Left lung (tissue), 14 donors: ENCODE measurements at regions of chr6 and their contacts with region 1.

Region 1: DNA sequence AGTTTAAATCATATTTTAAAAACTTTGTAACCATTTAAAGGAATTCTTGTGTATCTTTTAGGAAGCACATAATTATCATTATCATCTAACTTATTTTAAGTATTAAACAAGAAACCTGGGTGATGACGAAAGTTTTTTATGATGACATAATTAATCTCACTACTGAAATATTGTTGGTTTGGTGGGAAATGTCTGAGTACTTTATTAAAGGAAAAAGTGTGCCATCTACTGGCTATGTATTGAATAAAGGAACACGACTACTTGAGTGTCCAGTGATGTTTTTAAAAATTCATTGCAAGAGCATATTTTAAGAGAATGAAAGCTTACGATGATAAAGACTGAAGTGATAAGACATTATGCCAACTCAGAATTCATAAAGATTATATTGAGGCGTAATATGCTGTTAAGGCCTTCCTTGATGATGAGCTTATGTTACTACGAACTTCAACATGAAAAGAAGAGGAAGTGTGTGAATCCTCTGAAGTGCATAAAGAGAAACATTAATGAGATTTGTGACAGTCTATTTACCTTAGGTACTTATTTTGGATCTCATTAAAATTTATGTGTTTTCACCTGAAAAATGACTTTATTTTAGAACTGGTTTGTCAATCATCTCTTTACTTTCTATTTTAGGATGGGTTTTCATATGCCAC is 12.0 kb upstream of the TRMT11 start:
- DNase-seq: peak in 1 of 4 donors; percentile 46
- ATAC-seq: peak; percentile 80
- H3K4me3 ChIP-seq: no peak overlapping the region
- H3K27ac ChIP-seq: no peak overlapping the region
- H3K4me1 ChIP-seq: peaks cover 0 to 3% of the 10 kb centered on the region in 2 donors
- H3K27me3 ChIP-seq: no peaks in the 10 kb centered on the region
- CTCF ChIP-seq: peak; percentile 48 to 49

Region 2: DNA sequence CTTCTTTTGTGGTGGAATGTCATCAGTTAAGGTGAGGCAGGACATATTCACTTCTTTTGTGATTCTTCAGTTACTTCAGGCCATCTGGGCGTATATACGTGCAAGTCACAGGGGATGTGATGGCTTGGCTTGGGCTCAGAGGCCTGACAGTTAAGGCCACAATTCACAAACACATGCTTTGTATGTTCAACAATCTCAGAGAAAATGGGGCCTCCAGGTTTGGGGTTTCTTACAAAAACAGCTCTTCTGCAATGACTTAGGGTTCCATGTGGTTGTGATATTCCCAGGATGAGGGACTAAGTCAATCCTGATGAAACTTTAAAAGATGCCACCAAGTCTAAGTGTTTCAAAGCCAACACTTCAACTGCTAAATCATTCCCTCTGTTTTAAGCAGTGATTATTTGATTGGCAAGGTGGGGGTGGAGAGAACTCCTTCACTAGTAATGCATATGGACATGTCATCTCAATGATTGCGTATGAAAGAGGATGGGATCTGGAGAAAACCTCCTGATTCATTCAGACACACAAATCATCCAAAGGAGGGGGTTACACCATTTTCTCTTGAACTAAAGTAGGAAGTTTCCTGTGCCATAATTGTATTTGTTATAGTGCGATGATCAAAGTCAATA is 266.6 kb before region 1 on chr6:
- intact Hi-C with region 1: no loop called
- DNase-seq: no peak
- ATAC-seq: no peak
- H3K4me3 ChIP-seq: no peak overlapping the region
- H3K27ac ChIP-seq: no peak overlapping the region
- H3K4me1 ChIP-seq: no peaks in the 10 kb centered on the region
- H3K27me3 ChIP-seq: no peaks in the 10 kb centered on the region
- CTCF ChIP-seq: no peak

Region 3: GRCh38 chr6:125769147-125769783 is 205.1 kb before region 1 on chr6:
- intact Hi-C with region 1: no loop called
- DNase-seq: no peak
- ATAC-seq: no peak
- H3K4me3 ChIP-seq: no peak overlapping the region
- H3K27ac ChIP-seq: no peak overlapping the region
- H3K4me1 ChIP-seq: no peaks in the 10 kb centered on the region
- H3K27me3 ChIP-seq: peaks cover 0 to 10% of the 10 kb centered on the region in 2 donors
- CTCF ChIP-seq: no peak

Region 4: DNA sequence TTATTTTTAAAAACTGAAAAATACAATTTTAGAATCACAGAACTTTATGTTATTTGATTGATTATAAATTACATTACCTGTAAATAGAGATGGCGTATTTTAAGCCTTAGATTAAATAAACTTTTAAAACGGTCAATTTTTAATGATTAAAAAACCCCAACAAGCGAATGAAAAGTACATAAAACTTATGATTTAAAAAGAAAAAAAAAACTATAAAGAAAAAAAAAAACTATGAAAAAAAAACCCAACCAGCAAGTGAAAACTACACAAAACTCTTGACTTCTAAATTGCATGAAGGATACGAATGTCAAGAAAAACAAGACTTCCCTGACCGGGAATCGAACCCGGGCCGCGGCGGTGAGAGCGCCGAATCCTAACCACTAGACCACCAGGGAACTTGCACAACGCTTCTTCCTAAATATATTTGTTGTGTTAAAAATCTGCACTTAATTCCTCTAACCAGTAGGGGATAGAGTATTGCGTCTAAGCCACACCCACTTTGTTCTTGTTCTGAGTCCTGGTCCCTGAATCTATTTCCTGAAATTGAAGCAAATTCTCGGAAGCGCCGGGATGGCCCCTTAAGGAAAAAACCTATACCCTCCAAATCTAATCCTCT is 194.3 kb before region 1 on chr6:
- intact Hi-C with region 1: loop called in 1 of 2 experiments (anchors 5 kb)
- DNase-seq: peak; percentile 72 to 94 (median 90)
- ATAC-seq: peak; percentile 93
- H3K4me3 ChIP-seq: peak overlapping the region; percentile 46 to 65
- H3K27ac ChIP-seq: peak overlapping the region; percentile 96 to 99
- H3K4me1 ChIP-seq: peaks cover 7 to 14% of the 10 kb centered on the region in 2 donors
- H3K27me3 ChIP-seq: no peaks in the 10 kb centered on the region
- CTCF ChIP-seq: peak in 1 of 2 donors; percentile 43

Region 5: GRCh38 chr6:125858427-125859320 is 115.7 kb before region 1 on chr6:
- intact Hi-C with region 1: loop called in 1 of 2 experiments (anchors 10 kb)
- DNase-seq: peak in 3 of 4 donors; percentile 19 to 60 (median 43)
- ATAC-seq: peak; percentile 89
- H3K4me3 ChIP-seq: no peak overlapping the region
- H3K27ac ChIP-seq: no peak overlapping the region
- H3K4me1 ChIP-seq: peaks cover 0 to 7% of the 10 kb centered on the region in 2 donors
- H3K27me3 ChIP-seq: no peaks in the 10 kb centered on the region
- CTCF ChIP-seq: peak; percentile 54 to 55